ENCODE measurements at regions of chr7 and their contacts with region 1.

Region 1: DNA sequence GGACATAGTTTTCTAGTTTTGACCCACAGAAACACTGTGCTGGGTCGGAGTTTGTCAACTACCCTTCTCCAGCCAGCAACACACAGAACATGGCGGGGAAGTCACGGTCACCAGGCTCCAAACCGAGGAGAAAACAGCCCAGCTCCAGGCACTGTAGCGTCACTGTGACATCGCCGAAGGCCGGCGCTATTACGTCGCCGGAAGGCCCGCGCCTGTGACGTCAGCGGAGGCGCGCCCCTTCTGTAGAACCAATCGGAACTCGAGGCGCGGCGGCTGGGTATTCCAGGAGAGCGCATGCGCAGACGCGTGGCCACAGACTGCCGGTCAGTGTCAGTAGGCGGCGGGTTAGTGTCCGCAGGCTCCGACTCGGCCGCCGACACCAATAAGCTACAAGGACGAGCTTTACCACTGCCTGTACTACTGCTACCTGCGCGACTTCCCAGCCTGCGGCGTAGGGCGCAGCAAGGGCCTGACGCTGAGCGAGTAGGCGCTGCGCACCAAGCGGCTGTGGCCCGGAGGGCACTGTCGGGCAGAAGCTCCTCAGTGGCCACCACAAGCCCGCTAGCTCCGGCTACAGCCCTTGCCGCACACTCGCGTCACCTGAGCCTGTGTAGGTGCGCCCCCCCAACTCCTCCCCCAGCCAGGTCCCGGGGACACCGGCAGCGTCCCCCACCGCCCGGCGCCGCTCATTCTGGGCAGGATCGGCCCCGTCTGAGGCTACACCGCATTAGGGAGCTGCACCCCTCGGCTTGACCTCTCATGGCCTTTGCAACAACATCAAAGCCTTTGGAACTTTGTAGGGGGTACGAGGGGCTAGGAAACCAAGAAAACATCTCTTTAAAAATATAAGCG is 35.1 kb upstream of the SRRM3 start:
- DNase-seq: peak; percentile 81 to 96 (median 90)
- ATAC-seq: peak; percentile 88
- H3K4me3 ChIP-seq: peak overlapping the region; percentile 92
- H3K4me3 Mint-ChIP-seq: peak overlapping the region; percentile 93
- H3K27ac ChIP-seq: peak overlapping the region; percentile 75 to 87
- H3K27ac Mint-ChIP-seq: peak overlapping the region; percentile 99
- H3K4me1 ChIP-seq: peaks cover 16% of the 10 kb centered on the region
- H3K4me1 Mint-ChIP-seq: peaks cover 12% of the 10 kb centered on the region
- H3K27me3 ChIP-seq: no peaks in the 10 kb centered on the region
- H3K27me3 Mint-ChIP-seq: no peaks in the 10 kb centered on the region
- CTCF ChIP-seq: no peak

Region 2: DNA sequence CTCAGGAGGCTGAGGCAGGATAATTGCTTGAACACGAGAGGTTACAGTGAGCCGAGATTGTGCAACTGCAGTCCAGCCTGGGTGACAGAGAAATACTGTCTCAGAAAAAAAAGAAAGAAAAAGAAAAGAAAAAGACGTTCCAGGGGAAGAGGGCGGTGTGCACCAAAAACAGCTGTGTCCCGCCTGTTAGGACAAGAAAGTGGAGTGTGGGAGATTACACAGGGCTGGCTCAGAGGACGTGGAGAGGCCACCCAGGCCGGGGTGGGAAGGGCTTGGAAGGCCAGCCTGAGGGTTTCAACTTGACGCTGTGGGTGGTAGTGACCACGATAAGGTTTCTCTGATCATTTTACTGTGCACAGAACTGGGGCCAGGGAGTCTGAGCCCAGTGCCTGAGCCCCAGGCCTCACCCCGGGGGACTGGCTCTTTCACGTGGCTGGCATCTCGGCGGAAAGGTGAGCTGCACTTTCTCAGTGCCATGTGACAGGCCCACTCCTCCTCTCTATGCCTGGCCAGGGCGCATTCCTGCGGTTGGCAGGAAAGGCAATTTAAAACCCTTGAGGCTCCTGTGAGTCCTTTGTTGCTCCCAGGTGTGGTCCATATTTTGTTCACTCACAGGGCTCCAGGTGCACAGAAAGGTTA is 273.9 kb before region 1 on chr7:
- CTCF ChIA-PET with region 1: no interaction called
- POLR2A ChIA-PET with region 1: no interaction called
- intact Hi-C with region 1: no loop called
- DNase-seq: no peak
- ATAC-seq: no peak
- H3K4me3 ChIP-seq: no peak overlapping the region
- H3K4me3 Mint-ChIP-seq: no peak overlapping the region
- H3K27ac ChIP-seq: no peak overlapping the region
- H3K27ac Mint-ChIP-seq: no peak overlapping the region
- H3K4me1 ChIP-seq: no peaks in the 10 kb centered on the region
- H3K4me1 Mint-ChIP-seq: no peaks in the 10 kb centered on the region
- H3K27me3 ChIP-seq: no peaks in the 10 kb centered on the region
- H3K27me3 Mint-ChIP-seq: no peaks in the 10 kb centered on the region
- CTCF ChIP-seq: no peak

Region 3: GRCh38 chr7:76047811-76048667 is 118.6 kb before region 1 on chr7 and contains the starts of genes MDH2 and STYXL1:
- CTCF ChIA-PET with region 1: no interaction called
- POLR2A ChIA-PET with region 1: interaction called, 12 read pairs
- intact Hi-C with region 1: loop called in 1 of 2 experiments (anchors 2 kb)
- DNase-seq: peak; percentile 69 to 94 (median 78)
- ATAC-seq: peak; percentile 76
- H3K4me3 ChIP-seq: peak within 1 kb of the TSS; percentile 100
- H3K4me3 Mint-ChIP-seq: peak within 1 kb of the TSS; percentile 93
- H3K27ac ChIP-seq: peak within 1 kb of the TSS; percentile 65 to 96
- H3K27ac Mint-ChIP-seq: peak within 1 kb of the TSS; percentile 96
- H3K4me1 ChIP-seq: peaks cover 57% of the 10 kb centered on the region
- H3K4me1 Mint-ChIP-seq: peaks cover 65% of the 10 kb centered on the region
- H3K27me3 ChIP-seq: no peaks in the 10 kb centered on the region
- H3K27me3 Mint-ChIP-seq: no peaks in the 10 kb centered on the region
- CTCF ChIP-seq: no peak
- total RNA-seq, gene MDH2: 66.4 to 68.3 TPM
- total RNA-seq, gene STYXL1: 8.4 to 8.5 TPM

Region 4: DNA sequence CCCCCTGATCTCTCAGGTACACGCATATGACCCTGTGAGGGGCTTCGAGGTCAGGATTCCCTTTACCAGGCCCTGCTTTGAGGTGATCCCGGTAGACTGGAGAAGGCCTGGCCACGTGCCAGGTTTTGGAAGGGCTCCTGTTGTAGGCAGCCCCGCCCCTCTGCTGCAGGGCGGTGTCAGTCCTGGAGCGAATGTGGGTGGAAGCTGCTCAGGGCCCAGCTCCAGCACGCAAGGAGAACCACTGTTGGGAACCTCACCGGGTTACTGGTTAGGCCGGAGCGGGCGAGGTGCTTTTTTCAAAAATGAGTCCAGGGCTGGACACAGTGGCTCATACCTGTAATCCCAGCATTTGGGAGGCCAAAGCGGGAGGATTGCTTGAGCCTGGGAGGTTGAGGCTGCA is 103.1 kb before region 1 on chr7:
- CTCF ChIA-PET with region 1: no interaction called
- POLR2A ChIA-PET with region 1: no interaction called
- intact Hi-C with region 1: no loop called
- DNase-seq: no peak
- ATAC-seq: no peak
- H3K4me3 ChIP-seq: no peak overlapping the region
- H3K4me3 Mint-ChIP-seq: no peak overlapping the region
- H3K27ac ChIP-seq: no peak overlapping the region
- H3K27ac Mint-ChIP-seq: no peak overlapping the region
- H3K4me1 ChIP-seq: no peaks in the 10 kb centered on the region
- H3K4me1 Mint-ChIP-seq: no peaks in the 10 kb centered on the region
- H3K27me3 ChIP-seq: no peaks in the 10 kb centered on the region
- H3K27me3 Mint-ChIP-seq: no peaks in the 10 kb centered on the region
- CTCF ChIP-seq: no peak

Region 5: GRCh38 chr7:76133164-76133775 is 33.4 kb before region 1 on chr7:
- CTCF ChIA-PET with region 1: no interaction called
- POLR2A ChIA-PET with region 1: interaction called, 12 read pairs
- intact Hi-C with region 1: no loop called
- DNase-seq: peak in 2 of 14 experiments; percentile 16 to 27
- ATAC-seq: peak; percentile 71
- H3K4me3 ChIP-seq: peak overlapping the region; percentile 7
- H3K4me3 Mint-ChIP-seq: peak overlapping the region; percentile 63
- H3K27ac ChIP-seq: no peak overlapping the region
- H3K27ac Mint-ChIP-seq: peak overlapping the region; percentile 90
- H3K4me1 ChIP-seq: peaks cover 2% of the 10 kb centered on the region
- H3K4me1 Mint-ChIP-seq: peaks cover 48% of the 10 kb centered on the region
- H3K27me3 ChIP-seq: no peaks in the 10 kb centered on the region
- H3K27me3 Mint-ChIP-seq: no peaks in the 10 kb centered on the region
- CTCF ChIP-seq: no peak

Region 6: DNA sequence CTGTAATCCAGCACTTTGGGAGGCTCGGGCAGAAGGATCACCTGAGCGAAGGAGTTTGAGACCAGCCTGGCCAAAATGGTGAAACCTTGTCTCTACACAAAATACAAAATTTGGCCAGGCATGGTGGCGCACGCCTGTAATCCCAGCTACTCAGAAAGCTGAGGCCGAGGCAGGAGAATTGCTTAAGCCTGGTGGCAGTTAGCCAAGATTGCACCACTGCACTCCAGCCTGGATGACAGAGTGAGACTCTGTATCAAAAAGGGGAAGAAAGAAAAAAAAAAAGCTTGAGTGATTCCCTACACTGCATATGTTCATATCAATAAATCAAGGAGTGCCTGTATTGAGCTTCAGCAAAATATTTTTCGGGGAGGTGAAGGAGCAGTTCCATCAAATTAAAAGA is 10.7 kb before region 1 on chr7:
- CTCF ChIA-PET with region 1: interaction called, 3 read pairs
- POLR2A ChIA-PET with region 1: interaction called, 14 read pairs
- intact Hi-C with region 1: no loop called
- DNase-seq: peak in 2 of 14 experiments; percentile 56 to 63
- ATAC-seq: no peak
- H3K4me3 ChIP-seq: no peak overlapping the region
- H3K4me3 Mint-ChIP-seq: no peak overlapping the region
- H3K27ac ChIP-seq: no peak overlapping the region
- H3K27ac Mint-ChIP-seq: no peak overlapping the region
- H3K4me1 ChIP-seq: peaks cover 6% of the 10 kb centered on the region
- H3K4me1 Mint-ChIP-seq: peaks cover 31% of the 10 kb centered on the region
- H3K27me3 ChIP-seq: no peaks in the 10 kb centered on the region
- H3K27me3 Mint-ChIP-seq: no peaks in the 10 kb centered on the region
- CTCF ChIP-seq: no peak

Region 7: GRCh38 chr7:76179686-76180085 is 13.1 kb after region 1 on chr7:
- CTCF ChIA-PET with region 1: interaction called, 10 read pairs
- POLR2A ChIA-PET with region 1: interaction called, 5 read pairs
- intact Hi-C with region 1: no loop called
- DNase-seq: no peak
- ATAC-seq: no peak
- H3K4me3 ChIP-seq: no peak overlapping the region
- H3K4me3 Mint-ChIP-seq: no peak overlapping the region
- H3K27ac ChIP-seq: no peak overlapping the region
- H3K27ac Mint-ChIP-seq: no peak overlapping the region
- H3K4me1 ChIP-seq: peaks cover 6% of the 10 kb centered on the region
- H3K4me1 Mint-ChIP-seq: no peaks in the 10 kb centered on the region
- H3K27me3 ChIP-seq: no peaks in the 10 kb centered on the region
- H3K27me3 Mint-ChIP-seq: no peaks in the 10 kb centered on the region
- CTCF ChIP-seq: no peak